Activated CD4-positive, alpha-beta memory T cell treated with anti-CD3 and anti-CD28 coated beads, Interleukin-2, amount 10 ng/mL, durations not matched to agents 7 days and 5 days (primary cell): ENCODE measurements at regions of chr22 and their contacts with region 1.

Region 1: DNA sequence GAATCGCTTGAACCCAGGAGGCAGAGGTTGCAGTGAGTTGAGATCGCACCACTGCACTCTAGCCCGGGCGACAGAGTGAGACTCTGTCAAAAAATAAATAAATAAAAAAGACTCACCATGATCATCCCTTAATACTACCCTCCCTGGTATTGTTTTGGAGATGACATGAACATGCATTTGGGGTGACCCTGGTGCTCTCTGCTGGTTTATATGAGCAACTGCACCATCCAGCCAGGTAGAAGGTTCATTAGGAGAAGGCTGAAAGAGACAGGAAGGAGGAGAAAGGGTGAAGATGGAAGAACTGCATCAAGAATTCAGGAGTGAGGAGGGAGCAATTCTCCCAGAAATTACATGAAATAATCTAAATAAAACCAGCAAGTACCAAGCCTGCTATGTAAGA is 37.8 kb downstream of the SLC5A1 start:
- DNase-seq: peak; percentile 34
- H3K4me3 Mint-ChIP-seq: no peak overlapping the region
- H3K27ac Mint-ChIP-seq: no peak overlapping the region
- H3K4me1 Mint-ChIP-seq: peaks cover 4% of the 10 kb centered on the region
- H3K27me3 Mint-ChIP-seq: peaks cover 24% of the 10 kb centered on the region

Region 2: GRCh38 chr22:31977141-31977841 is 103.6 kb before region 1 on chr22:
- CTCF ChIA-PET with region 1: interaction called, 39 read pairs
- POLR2A ChIA-PET with region 1: no interaction called
- DNase-seq: peak; percentile 84
- H3K4me3 Mint-ChIP-seq: no peak overlapping the region
- H3K27ac Mint-ChIP-seq: no peak overlapping the region
- H3K4me1 Mint-ChIP-seq: peaks cover 4% of the 10 kb centered on the region
- H3K27me3 Mint-ChIP-seq: peaks cover 16% of the 10 kb centered on the region

Region 3: DNA sequence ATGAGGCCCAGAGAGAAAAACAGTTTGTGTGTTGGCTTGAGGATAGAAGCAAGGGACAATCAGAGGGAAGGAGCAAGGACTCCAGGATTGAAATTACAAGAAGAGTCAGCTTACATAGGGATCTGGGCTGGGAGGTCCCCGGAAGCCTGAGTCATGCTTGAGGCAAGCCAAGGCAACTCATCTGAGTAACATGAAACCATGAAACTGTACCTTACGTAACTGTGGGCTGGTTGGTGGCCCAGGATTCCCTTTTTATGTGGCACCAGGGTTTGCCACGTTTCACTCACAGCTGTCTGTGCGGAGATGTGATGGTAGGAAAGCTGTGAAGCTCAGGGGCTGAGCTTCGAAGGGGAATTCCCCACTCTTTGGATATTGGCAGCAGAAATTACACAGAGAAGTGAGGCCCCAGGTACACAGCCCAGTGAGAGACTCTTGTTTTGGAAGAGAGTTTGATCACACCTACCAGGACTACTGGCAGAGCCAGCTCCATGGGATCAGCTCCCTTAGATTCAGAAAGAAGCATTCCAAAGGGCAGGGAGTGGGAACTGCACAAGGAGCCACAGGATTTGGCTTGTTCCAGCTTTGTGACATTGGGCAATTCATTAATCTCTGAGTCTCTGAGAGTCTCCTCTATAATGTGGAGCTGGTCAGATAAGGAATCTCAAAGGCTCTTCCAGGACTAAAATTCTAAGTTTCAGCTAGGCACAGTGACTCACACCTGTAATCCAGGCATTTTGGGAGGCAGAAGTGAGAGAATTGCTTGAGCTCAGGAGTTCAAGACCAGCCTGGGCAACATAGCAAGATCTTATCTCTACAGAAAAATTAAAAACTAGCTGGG is 30.0 kb before region 1 on chr22:
- CTCF ChIA-PET with region 1: no interaction called
- POLR2A ChIA-PET with region 1: no interaction called
- DNase-seq: peak; percentile 74
- H3K4me3 Mint-ChIP-seq: no peak overlapping the region
- H3K27ac Mint-ChIP-seq: no peak overlapping the region
- H3K4me1 Mint-ChIP-seq: peaks cover 16% of the 10 kb centered on the region
- H3K27me3 Mint-ChIP-seq: peaks cover 74% of the 10 kb centered on the region